Posterior vena cava (tissue), 2 donors: ENCODE measurements at regions of chr10 and their contacts with region 1.

Region 1: DNA sequence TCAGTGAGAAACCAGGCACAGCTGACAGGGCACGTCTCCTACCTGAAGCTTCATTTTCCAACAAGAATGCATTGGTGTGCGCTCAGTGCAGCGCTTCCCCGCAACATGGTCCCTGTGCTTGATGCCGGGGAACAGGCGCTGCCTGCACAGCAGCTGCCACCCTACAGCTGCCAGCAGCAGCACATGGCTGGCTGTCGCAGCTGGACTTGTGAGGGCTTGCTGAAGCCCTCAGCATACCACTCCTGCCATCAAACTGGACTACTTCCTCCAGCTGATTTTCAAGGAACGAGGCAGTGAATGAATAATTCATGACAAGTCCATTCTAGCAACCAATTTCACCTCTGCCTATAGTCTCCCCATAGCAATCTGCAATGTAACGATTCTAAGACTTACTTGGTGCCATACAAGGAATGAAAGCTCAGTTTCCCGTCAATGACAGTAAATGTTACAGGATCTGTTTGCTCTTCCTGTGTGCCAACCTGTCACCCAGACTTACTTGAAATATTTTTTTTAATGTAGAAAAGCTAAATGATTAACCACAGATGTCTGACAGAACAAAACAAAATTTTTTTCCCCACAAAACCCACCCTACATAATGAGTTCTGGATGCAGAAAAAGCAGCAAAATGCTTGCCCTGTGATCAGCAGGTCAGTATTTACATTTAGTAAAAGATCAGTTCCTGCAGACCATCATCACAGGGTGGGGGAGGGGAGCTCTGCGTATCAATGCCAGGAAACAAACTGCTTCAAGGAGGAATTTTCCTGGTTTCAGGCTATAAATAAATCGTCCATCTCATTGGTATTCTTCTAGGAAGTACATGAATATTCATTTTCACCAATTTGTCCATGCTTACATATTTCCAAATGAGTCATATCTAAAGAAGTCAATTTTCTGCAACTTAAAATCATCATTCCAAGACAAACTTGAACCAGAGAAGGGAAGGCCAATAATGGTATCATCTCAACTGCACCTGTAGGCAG is 140.6 kb downstream of the ALOX5 start:
- DNase-seq: peak; percentile 51

Region 2: GRCh38 chr10:45547207-45547606 is 32.6 kb after region 1 on chr10:
- intact Hi-C with region 1: loop called in 1 of 2 experiments (anchors 1 kb)
- DNase-seq: no peak